ENCODE measurements at regions of chr17 and their contacts with region 1.

Region 1: DNA sequence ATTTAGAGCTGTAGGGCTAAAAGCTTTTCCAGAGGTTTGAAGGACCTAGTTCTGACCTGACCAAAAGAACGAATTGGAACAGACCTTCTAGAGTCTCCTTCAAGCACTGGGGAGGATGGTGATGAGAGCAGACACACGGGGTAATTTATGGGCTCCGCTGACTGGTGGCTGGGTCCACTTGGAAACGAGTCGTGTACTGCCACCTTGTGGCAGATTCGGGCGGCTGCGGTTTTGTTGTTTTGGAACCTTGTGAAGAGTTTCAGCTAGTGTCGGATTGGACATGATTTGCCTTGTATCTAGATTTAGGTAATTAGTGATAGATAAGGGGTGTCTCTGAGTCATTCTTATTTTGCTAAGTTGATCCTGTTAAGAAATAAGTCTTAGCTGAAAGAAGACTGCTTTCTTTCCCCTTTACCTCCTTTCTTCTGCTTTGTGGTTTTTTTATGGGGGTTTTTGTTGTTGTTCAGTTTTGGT is 98.9 kb downstream of the AATF start:
- DNase-seq: peak; percentile 82
- H3K4me3 ChIP-seq: no peak overlapping the region; a peak in 1 of 4 replicates
- H3K27ac ChIP-seq: no peak overlapping the region
- H3K4me1 ChIP-seq: peaks cover 0 to 2% of the 10 kb centered on the region in 2 experiments; a peak in 1 of 4 replicates
- H3K27me3 ChIP-seq: no peaks in the 10 kb centered on the region
- CTCF ChIP-seq: peak; percentile 94
- EP300 ChIP-seq: no peak; a peak in 1 of 4 replicates
- RAD21 ChIP-seq: peak; percentile 95

Region 2: DNA sequence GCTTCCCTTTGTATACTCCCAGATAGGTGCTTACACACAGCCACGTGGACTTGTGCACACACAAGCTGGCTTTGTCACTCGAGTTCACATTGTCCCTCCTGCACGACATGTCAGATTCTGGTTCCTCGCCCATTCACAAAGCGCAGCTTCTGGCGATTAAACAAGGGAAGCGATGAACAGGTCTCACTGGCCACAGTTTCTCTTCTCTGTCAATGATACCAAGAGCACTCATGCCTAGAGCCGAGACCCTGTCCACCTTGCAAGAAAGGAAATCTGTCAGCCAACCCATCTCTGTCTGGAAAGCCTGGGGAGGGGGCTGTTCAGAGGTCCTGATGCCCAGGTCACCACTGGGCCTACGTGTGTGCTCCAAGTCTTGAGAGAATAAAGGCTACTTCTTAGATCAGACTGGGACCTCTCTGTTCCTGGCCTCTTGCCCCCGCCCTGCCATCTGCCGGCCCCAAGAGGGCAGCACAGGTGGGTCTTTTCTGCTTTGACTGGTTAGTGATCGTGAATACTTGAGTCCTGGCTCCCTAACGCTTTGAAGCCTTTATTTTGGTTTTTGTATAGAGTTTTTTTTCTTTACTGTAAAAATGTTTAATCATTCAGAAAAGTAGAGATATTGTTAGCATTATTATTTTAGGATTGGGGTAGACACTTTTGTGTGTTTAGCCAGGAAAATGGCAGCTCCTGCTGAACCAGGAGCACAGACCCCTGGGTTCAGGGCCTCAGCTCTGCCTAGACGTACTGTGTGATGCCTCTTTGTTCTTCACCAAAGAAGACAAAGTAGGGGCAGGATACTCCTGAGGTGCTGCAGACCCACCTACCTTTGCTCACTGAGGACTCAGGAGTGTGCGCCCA is 341.6 kb before region 1 on chr17:
- CTCF ChIA-PET with region 1: interaction called, 16 read pairs
- POLR2A ChIA-PET with region 1: no interaction called
- DNase-seq: peak; percentile 86
- H3K4me3 ChIP-seq: no peak overlapping the region
- H3K27ac ChIP-seq: no peak overlapping the region
- H3K4me1 ChIP-seq: peaks cover 0 to 2% of the 10 kb centered on the region in 2 experiments; a peak in 1 of 4 replicates
- H3K27me3 ChIP-seq: no peaks in the 10 kb centered on the region; the same call in 1 of the 2 replicates
- CTCF ChIP-seq: peak; percentile 67
- EP300 ChIP-seq: no peak
- RAD21 ChIP-seq: peak; percentile 87

Region 3: GRCh38 chr17:37019117-37019740 is 28.4 kb before region 1 on chr17:
- CTCF ChIA-PET with region 1: interaction called, 20 read pairs
- POLR2A ChIA-PET with region 1: no interaction called
- DNase-seq: no peak
- H3K4me3 ChIP-seq: no peak overlapping the region
- H3K27ac ChIP-seq: no peak overlapping the region
- H3K4me1 ChIP-seq: peaks cover 0 to 11% of the 10 kb centered on the region in 2 experiments; a peak in 2 of 4 replicates
- H3K27me3 ChIP-seq: no peaks in the 10 kb centered on the region
- CTCF ChIP-seq: no peak
- EP300 ChIP-seq: no peak
- RAD21 ChIP-seq: no peak

Region 4: DNA sequence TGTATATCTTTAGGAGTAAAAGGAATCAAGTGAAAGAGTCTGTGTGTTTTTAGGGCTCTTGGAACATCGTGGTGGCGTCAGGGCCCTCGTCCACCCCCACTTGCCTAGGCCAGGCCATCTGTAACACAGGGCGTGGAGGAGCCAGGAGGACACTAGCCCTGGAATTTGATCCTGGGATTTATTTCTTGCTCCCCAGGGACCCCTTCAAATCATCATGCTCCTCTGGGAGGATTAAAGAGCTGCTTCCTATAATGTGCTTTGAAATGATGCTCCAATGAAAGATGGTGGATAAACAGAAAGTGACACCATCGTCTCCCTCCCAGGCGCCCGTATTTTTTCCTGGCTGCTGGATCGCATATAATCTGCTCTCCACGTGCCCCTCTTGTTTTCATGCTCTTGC is 14.4 kb after region 1 on chr17:
- CTCF ChIA-PET with region 1: interaction called, 36 read pairs
- POLR2A ChIA-PET with region 1: no interaction called
- DNase-seq: no peak
- H3K4me3 ChIP-seq: no peak overlapping the region
- H3K27ac ChIP-seq: no peak overlapping the region
- H3K4me1 ChIP-seq: peaks cover 0 to 4% of the 10 kb centered on the region in 2 experiments; a peak in 1 of 4 replicates
- H3K27me3 ChIP-seq: no peaks in the 10 kb centered on the region
- CTCF ChIP-seq: no peak
- EP300 ChIP-seq: no peak
- RAD21 ChIP-seq: no peak

Region 5: GRCh38 chr17:37134050-37134449 is 86.4 kb after region 1 on chr17:
- CTCF ChIA-PET with region 1: interaction called, 12 read pairs
- POLR2A ChIA-PET with region 1: no interaction called
- DNase-seq: peak; percentile 54
- H3K4me3 ChIP-seq: no peak overlapping the region
- H3K27ac ChIP-seq: peak overlapping the region in 1 of 2 experiments; percentile 96; a peak in 2 of 4 replicates
- H3K4me1 ChIP-seq: peaks cover 0 to 47% of the 10 kb centered on the region in 2 experiments; a peak in 2 of 4 replicates
- H3K27me3 ChIP-seq: no peaks in the 10 kb centered on the region
- CTCF ChIP-seq: no peak
- EP300 ChIP-seq: peak in 1 of 2 experiments; percentile 86; a peak in 2 of 4 replicates
- RAD21 ChIP-seq: peak; percentile 45

Region 6: GRCh38 chr17:37212179-37212578 is 164.5 kb after region 1 on chr17:
- CTCF ChIA-PET with region 1: interaction called, 18 read pairs
- POLR2A ChIA-PET with region 1: no interaction called
- DNase-seq: no peak
- H3K4me3 ChIP-seq: no peak overlapping the region
- H3K27ac ChIP-seq: no peak overlapping the region
- H3K4me1 ChIP-seq: peaks cover 5 to 8% of the 10 kb centered on the region in 2 experiments; a peak in 3 of 4 replicates
- H3K27me3 ChIP-seq: no peaks in the 10 kb centered on the region
- CTCF ChIP-seq: peak; percentile 48
- EP300 ChIP-seq: no peak
- RAD21 ChIP-seq: peak; percentile 46

Region 7: GRCh38 chr17:37327341-37328090 is 279.8 kb after region 1 on chr17:
- CTCF ChIA-PET with region 1: no interaction called
- POLR2A ChIA-PET with region 1: no interaction called
- DNase-seq: no peak
- H3K4me3 ChIP-seq: no peak overlapping the region
- H3K27ac ChIP-seq: no peak overlapping the region
- H3K4me1 ChIP-seq: no peaks in the 10 kb centered on the region
- H3K27me3 ChIP-seq: no peaks in the 10 kb centered on the region
- CTCF ChIP-seq: no peak
- EP300 ChIP-seq: no peak
- RAD21 ChIP-seq: no peak

Measured in SK-N-SH (cell line).